ENCODE measurements at regions of chr3 and their contacts with region 1.

Region 1: GRCh38 chr3:49358217-49358883 is at the start of gene GPX1:
- DNase-seq: peak; percentile 92
- ATAC-seq: peak; percentile 92
- H3K4me3 ChIP-seq: peak within 1 kb of the TSS; percentile 64 to 85
- H3K27ac ChIP-seq: peak within 1 kb of the TSS; percentile 99
- H3K4me1 ChIP-seq: peaks cover 15 to 31% of the 10 kb centered on the region in 2 experiments
- H3K27me3 ChIP-seq: no peaks in the 10 kb centered on the region
- CTCF ChIP-seq: no peak
- POLR2A ChIP-seq: peak; percentile 88
- RAD21 ChIP-seq: peak; percentile 5; the same call in 1 of the 2 replicates
- total RNA-seq, gene GPX1: 330 TPM

Region 2: DNA sequence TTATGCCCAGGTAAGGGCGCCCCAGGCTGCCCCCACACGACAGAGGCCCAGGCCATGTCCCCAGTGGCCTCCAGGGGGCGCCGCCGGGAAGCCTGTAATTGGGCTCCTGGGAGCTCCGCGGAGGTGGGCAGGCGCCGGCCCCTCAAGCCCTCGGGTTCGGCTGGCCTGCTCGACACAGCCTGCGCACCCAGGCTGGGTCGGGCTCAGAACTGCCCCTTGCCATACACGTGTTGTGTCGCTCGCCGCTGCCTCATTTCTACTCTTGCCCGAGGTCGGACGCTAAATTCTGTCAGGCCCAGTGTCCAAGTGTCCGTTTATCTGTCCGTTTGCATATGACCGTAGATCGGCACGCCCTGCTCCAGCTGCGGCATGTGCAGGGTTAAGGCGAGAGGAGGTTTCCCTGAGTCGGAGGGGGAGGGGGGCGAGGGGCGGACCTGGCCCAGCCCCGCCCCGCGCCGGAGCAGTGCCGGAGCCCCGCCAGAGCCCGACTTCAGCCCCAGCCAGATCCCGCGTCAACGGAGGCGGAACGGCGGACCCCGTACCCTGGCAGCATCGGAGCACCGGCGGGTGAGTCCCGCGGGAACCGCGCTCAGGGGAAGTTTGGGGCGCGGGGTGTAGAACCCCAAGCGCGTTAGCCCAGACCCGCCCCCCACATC is 187.1 kb before region 1 on chr3 and contains the start of gene KLHDC8B:
- CTCF ChIA-PET with region 1: no interaction called
- POLR2A ChIA-PET with region 1: no interaction called
- RAD21 ChIA-PET with region 1: no interaction called
- intact Hi-C with region 1: loop called (anchors 5 kb)
- DNase-seq: peak; percentile 54
- ATAC-seq: peak; percentile 90
- H3K4me3 ChIP-seq: peak within 1 kb of the TSS; percentile 57 to 74
- H3K27ac ChIP-seq: peak within 1 kb of the TSS; percentile 58
- H3K4me1 ChIP-seq: peaks cover 18 to 45% of the 10 kb centered on the region in 2 experiments
- H3K27me3 ChIP-seq: no peaks in the 10 kb centered on the region
- CTCF ChIP-seq: peak in 2 of 3 experiments; percentile 91 to 97; a peak in 4 of 6 replicates
- POLR2A ChIP-seq: peak; percentile 36
- RAD21 ChIP-seq: no peak
- total RNA-seq, gene KLHDC8B: 10.4 TPM

Region 3: DNA sequence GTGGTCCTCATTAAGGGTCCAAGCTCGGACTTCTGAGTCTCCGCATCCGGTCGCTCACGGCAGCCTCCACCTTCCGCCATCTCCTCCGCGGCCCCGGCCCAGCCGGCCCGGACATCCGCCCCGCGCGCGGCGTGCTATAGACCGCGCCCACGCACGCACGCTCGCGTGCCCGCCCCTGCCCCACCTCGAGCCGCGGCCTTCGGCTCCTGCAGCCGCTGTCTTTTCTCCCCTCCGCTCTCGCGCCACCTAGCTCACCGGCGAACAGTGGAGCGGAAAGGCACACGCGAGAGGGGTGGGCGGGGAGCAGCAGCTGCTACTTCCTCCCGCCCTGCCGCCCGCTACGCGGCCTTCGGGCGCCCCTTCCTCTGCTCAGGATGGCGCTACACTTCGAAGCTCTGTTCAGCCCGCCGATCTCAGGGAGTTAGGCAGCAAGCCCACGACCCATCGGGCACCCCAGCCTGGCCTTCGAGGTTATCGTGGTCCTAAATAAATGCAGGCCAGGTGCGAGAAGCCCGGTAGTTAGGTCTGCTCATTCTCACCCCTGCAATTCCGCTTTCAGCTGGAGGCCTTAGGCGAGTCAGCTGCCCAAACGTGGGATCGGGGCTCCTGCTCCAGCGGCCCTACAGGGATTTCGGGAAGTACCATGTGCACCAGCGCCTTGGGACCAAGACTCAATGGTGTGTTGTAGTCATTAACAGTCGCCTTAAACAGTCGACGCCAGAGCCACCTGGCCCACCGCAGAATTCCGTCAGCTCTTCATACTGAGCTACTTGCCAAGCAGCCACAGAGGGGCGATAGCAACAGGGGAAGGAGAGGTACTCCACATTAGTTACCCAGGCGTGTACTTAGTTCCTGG is 18.2 kb before region 1 on chr3 and contains the start of gene USP4:
- CTCF ChIA-PET with region 1: interaction called, 5 read pairs
- POLR2A ChIA-PET with region 1: interaction called, 18 read pairs
- RAD21 ChIA-PET with region 1: interaction called in 1 of 2 experiments, 3 read pairs
- intact Hi-C with region 1: no loop called
- DNase-seq: peak; percentile 71
- ATAC-seq: peak; percentile 96
- H3K4me3 ChIP-seq: peak within 1 kb of the TSS; percentile 62 to 94
- H3K27ac ChIP-seq: peak within 1 kb of the TSS; percentile 73
- H3K4me1 ChIP-seq: peaks cover 8 to 20% of the 10 kb centered on the region in 2 experiments; a peak in 3 of 4 replicates
- H3K27me3 ChIP-seq: no peaks in the 10 kb centered on the region
- CTCF ChIP-seq: peak; percentile 30 to 37 (median 32); a peak in 5 of 6 replicates
- POLR2A ChIP-seq: peak; percentile 62
- RAD21 ChIP-seq: peak; percentile 60
- total RNA-seq, gene USP4: 31.7 TPM

Region 4: GRCh38 chr3:49411968-49412631 is 53.8 kb after region 1 on chr3 and contains the starts of genes RHOA and TCTA:
- CTCF ChIA-PET with region 1: no interaction called
- POLR2A ChIA-PET with region 1: no interaction called
- RAD21 ChIA-PET with region 1: no interaction called
- intact Hi-C with region 1: loop called (anchors 2 kb)
- DNase-seq: peak; percentile 100
- ATAC-seq: peak; percentile 88
- H3K4me3 ChIP-seq: peak within 1 kb of the TSS; percentile 94 to 95
- H3K27ac ChIP-seq: peak within 1 kb of the TSS; percentile 95
- H3K4me1 ChIP-seq: peaks cover 31 to 58% of the 10 kb centered on the region in 2 experiments; a peak in 3 of 4 replicates
- H3K27me3 ChIP-seq: no peaks in the 10 kb centered on the region
- CTCF ChIP-seq: no peak
- POLR2A ChIP-seq: peak; percentile 98
- RAD21 ChIP-seq: no peak
- total RNA-seq, gene RHOA: 497 TPM
- total RNA-seq, gene TCTA: 11.9 TPM